ENCODE measurements at regions of chrX and their contacts with region 1.

Region 1: DNA sequence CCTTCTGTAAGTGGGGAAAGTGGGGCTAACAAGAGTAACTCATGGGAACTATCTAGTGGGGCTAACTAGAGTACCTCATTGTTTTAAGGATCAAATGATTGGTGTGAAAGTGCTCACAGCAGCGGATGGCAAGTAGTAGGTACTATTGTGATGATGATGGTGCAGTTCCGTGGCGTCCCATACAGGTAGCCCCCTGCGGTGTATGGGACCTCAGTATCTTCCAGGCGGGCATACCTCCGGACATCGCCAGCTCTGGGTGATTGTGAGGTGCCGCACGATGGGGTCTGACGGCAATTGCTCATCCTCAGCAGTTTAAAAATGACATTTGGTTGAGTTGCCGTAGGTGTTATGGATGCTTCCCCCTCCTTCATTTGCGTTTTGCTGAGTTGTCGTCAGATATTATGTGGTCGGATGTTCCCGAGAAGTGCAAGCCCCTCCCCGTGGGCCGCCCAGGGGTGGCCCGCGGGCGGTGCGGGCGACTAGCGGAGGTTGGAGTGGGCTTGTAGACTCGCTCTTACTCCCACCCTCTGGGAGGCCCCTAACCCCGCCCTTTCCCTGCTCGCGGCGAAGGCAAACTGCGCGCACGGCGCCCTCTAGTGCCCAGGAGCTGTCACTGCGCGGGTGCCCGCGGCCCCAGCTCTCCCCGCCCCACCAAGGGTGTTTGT is 18.3 kb upstream of the GPR101 start:
- DNase-seq: peak; percentile 49 to 58
- ATAC-seq: peak; percentile 88 to 99
- H3K4me3 ChIP-seq: peak overlapping the region; percentile 51
- H3K27ac ChIP-seq: peak overlapping the region in 1 of 2 experiments; percentile 47; a peak in 2 of 6 replicates
- H3K4me1 ChIP-seq: no peaks in the 10 kb centered on the region
- CTCF ChIP-seq: peak; percentile 76
- EP300 ChIP-seq: no peak
- POLR2A ChIP-seq: no peak
- RAD21 ChIP-seq: peak; percentile 63 to 71

Region 2: GRCh38 chrX:136879001-136879687 is 173.0 kb before region 1 on chrX:
- CTCF ChIA-PET with region 1: no interaction called
- POLR2A ChIA-PET with region 1: no interaction called
- DNase-seq: no peak
- ATAC-seq: peak in 1 of 2 experiments; percentile 17; a peak in 1 of 6 replicates
- H3K4me3 ChIP-seq: peak overlapping the region; percentile 71
- H3K27ac ChIP-seq: peak overlapping the region; percentile 95 to 98
- H3K4me1 ChIP-seq: peaks cover 37% of the 10 kb centered on the region; the same call in 2 of the 3 replicates
- CTCF ChIP-seq: no peak
- EP300 ChIP-seq: no peak
- POLR2A ChIP-seq: no peak
- RAD21 ChIP-seq: no peak

Region 3: DNA sequence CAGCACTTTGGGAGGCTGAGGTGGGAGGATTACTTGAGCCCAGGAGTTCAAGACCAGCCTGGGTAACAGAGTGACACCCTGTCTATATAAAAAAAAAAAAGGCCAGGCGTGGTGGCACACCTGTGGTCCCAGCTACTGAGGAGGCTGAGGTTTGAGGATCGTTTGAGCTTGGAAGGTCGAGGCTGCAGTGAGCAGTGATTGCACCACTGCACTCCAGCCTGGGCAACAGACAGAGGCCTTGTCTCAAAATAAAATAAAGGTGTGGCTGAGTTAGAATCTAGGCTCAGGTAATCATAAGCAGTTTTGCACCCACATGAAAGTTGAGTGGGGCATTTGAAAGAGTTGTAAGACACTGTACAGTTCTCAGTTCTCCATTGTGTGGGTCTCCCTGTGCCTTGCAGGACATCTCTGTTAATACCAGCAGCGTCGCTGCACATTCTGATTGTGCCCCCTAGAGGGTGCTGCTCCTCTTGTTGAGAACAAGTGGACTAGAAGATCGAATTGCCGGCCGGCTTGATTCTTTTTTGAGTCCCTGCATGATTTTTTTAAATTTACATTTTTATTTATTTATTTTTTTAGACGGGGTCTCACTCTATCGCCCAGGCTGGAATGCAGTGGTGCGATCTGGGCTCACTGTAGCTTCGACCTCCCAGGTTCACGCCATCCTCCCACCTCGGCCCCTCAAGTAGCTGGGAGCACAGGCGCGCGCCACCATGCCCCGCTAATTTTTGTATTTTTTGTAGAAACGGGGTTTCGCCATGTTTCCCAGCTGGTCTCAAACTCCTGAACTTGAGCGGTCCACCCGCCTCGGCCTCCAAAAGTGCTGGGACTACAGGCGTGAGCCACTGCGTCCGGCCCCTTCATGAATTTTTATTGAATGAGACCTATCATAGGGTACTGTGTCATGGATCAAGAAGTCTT is 98.0 kb before region 1 on chrX:
- CTCF ChIA-PET with region 1: interaction called, 18 read pairs
- POLR2A ChIA-PET with region 1: no interaction called
- DNase-seq: peak; percentile 15 to 79
- ATAC-seq: peak; percentile 95 to 99
- H3K4me3 ChIP-seq: no peak overlapping the region
- H3K27ac ChIP-seq: no peak overlapping the region
- H3K4me1 ChIP-seq: no peaks in the 10 kb centered on the region
- CTCF ChIP-seq: peak; percentile 58
- EP300 ChIP-seq: no peak
- POLR2A ChIP-seq: no peak
- RAD21 ChIP-seq: peak; percentile 40 to 53; a peak in 4 of 5 replicates

Region 4: DNA sequence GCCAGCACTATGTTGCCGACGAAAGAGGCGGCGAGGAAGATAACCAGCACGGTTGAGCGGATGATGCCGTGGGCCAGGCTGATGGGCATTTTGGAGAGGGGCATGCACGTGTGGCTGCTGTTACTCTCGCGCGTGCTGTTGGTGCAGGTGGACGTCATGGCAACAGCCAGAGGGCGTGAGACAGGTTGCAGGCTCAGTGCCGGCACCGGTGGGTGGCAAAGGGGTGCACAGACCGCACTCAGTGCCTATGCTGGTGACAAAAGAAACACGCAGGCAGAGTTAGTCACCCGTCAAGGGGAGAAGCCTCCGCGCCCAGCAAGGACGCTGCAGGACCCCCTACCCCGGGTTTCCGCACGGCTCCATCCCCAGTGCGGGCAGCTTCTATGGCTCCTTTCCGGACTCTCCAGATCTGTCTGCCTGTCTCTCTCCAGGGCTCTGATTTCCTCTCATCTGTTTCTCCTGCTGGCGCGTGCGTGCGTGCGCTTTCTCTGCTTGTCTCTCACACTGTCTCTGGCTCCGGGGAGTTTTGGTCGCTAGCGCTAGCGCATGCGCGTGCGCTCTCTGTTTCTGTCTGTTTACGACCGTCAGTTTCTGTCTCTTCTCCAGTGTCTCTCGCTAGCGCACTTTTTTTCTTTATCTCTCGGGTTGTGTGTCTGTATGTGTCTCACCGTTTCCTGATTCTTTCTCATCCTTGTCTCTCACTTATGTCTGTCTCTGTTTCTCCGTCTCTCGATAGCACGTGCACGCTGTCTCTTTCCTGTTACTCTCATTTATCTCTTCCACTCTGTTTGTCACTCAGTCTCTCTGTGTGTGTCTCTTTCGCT is 20.4 kb before region 1 on chrX:
- CTCF ChIA-PET with region 1: interaction called, 15 read pairs
- POLR2A ChIA-PET with region 1: no interaction called
- DNase-seq: peak in 1 of 2 experiments; percentile 5
- ATAC-seq: peak in 1 of 2 experiments; percentile 70; a peak in 3 of 6 replicates
- H3K4me3 ChIP-seq: peak overlapping the region; percentile 25; the same call in 1 of the 3 replicates
- H3K27ac ChIP-seq: no peak overlapping the region
- H3K4me1 ChIP-seq: peaks cover 6% of the 10 kb centered on the region; the same call in 2 of the 3 replicates
- CTCF ChIP-seq: no peak
- EP300 ChIP-seq: no peak
- POLR2A ChIP-seq: no peak
- RAD21 ChIP-seq: no peak

Region 5: DNA sequence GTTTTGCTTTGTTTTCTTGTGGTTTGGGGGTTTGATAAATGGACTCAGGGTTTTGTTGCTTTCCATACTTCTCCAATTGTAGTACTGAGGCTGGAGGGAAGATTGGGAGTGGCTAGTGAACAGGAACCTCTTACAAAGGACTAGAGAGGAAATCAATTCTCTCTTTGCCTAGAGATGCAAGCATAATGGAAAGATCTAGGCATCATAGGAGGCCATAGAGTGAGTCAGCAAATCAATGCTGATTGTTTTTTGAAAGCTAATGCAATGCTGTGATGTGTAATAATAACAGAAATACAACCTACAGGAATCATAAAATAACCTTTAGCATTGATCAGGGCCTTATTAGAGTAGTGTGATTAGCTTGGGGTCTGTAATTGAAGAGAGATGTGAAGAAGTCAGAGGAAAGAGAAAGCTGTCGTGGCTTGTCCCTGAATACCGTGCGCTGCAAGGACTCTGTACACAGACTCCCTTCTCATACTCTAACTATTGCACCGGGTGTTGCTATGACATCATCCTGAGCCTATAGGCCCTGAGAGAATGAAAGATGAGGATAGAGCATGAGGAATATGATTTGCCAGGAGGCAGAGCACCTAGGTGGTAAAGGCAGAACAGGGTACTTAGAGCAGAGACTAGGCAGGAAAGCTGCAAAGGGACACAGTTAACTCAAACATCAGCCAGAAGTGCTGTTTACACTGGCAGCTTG is 11.0 kb after region 1 on chrX:
- CTCF ChIA-PET with region 1: interaction called, 11 read pairs
- POLR2A ChIA-PET with region 1: no interaction called
- DNase-seq: no peak
- ATAC-seq: no peak
- H3K4me3 ChIP-seq: no peak overlapping the region
- H3K27ac ChIP-seq: no peak overlapping the region
- H3K4me1 ChIP-seq: no peaks in the 10 kb centered on the region
- CTCF ChIP-seq: no peak
- EP300 ChIP-seq: no peak
- POLR2A ChIP-seq: no peak
- RAD21 ChIP-seq: no peak